Activated CD4-positive, alpha-beta T cell treated with anti-CD3 and anti-CD28 coated beads, Interleukin-2, amount 10 ng/mL, durations not matched to agents 7 days and 5 days (primary cell): ENCODE measurements at regions of chr13 and their contacts with region 1.

Region 1: GRCh38 chr13:99342723-99343315 is 35.6 kb upstream of the GPR183 start:
- DNase-seq: no peak
- H3K4me3 Mint-ChIP-seq: no peak overlapping the region
- H3K27ac Mint-ChIP-seq: no peak overlapping the region
- H3K4me1 Mint-ChIP-seq: peaks cover 52% of the 10 kb centered on the region
- H3K27me3 Mint-ChIP-seq: no peaks in the 10 kb centered on the region

Region 2: DNA sequence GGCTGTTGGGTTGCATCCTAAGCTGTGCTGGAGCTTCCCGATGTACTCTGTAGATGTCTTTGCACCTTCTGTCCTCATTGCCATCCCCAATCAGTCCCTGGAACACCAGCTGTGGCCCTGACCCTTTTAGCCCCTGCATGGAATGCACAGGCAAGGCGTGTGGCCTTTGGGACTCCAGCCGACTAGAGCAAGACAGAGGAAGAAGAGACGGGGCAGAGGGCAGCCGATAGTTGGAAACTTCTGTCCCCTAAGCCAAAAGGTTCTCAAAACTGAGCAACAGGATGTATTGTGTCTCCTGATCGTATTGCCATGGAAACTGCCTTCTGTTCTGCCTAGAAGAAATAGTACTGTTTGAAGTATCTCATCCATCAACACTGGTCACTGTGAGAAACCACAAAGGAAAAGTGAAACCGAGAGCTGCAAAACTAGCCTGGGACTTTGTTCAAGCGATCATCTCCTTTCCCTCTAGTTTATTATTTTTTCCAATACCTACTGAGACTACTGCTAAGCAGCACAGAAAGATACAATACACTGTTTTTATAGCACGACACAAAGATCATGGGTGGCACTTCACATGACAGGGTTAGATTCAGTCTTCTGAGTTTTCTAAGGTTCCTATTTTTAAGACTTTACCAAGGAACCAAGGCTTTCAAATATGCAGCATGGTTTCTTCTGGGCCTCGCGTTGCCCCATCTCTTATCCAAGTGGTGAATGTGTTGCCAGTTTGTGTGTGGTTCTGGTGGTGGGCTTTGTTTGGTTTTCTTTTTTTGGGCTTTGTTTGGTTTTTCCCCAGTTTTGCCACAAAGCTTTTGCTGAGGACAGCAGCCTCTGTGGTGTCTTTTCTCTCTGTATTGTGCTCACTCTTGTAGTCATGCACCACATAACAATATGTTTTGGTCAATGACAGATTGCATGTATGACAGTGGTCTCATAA is 13.6 kb after region 1 on chr13:
- CTCF ChIA-PET with region 1: interaction called, 10 read pairs
- POLR2A ChIA-PET with region 1: no interaction called
- DNase-seq: peak; percentile 90
- H3K4me3 Mint-ChIP-seq: peak overlapping the region; percentile 63
- H3K27ac Mint-ChIP-seq: peak overlapping the region; percentile 98
- H3K4me1 Mint-ChIP-seq: peaks cover 98% of the 10 kb centered on the region
- H3K27me3 Mint-ChIP-seq: no peaks in the 10 kb centered on the region

Region 3: GRCh38 chr13:99969919-99970621 is 627.3 kb after region 1 on chr13:
- CTCF ChIA-PET with region 1: no interaction called
- POLR2A ChIA-PET with region 1: no interaction called
- DNase-seq: peak; percentile 30
- H3K4me3 Mint-ChIP-seq: peak overlapping the region; percentile 61
- H3K27ac Mint-ChIP-seq: peak overlapping the region; percentile 86
- H3K4me1 Mint-ChIP-seq: peaks cover 14% of the 10 kb centered on the region
- H3K27me3 Mint-ChIP-seq: peaks cover 74% of the 10 kb centered on the region